ENCODE measurements at regions of chr6 and their contacts with region 1.

Region 1: DNA sequence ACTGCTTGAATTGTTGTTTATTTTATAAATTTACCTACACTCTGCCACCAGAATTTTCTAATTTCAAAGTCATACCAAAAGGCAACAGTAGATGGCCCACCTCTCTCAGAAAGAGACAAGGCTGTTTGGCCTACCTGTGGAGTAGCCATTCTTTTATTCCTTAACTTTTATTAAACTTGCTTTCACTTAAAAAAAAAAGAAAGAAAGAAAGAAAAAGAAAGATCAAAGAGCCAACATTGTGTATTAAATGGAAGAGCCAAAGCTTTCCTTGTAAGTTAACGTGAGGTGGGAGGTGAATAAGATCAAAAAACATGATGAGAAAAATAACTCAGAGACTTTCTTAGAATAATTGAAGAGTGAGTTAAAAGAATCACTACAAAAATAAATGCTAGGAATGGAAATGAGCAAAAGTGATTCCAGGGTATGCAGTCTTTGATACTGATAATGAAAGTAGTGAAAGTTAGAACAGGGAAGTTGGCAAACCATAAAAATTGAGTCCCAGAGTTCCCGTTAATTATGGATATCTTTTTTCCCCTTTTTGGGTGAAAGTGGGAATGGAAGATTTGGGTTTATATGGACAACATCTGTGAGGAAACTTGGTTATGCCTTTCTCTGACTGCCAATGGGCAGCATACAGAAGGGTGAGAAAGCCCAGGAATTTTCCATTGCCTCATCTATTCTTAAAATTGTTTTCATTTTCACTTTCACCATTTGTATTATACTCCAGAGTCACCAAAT is 35.9 kb upstream of the MYB start:
- DNase-seq: no peak
- H3K4me3 ChIP-seq: no peak overlapping the region
- H3K27ac ChIP-seq: no peak overlapping the region
- H3K4me1 ChIP-seq: no peaks in the 10 kb centered on the region
- H3K27me3 ChIP-seq: no peaks in the 10 kb centered on the region
- CTCF ChIP-seq: peak; percentile 14 to 76 (median 60)
- POLR2A ChIP-seq: no peak

Region 2: GRCh38 chr6:135299256-135299655 is 154.0 kb after region 1 on chr6:
- intact Hi-C with region 1: no loop called
- DNase-seq: no peak
- H3K4me3 ChIP-seq: no peak overlapping the region
- H3K27ac ChIP-seq: no peak overlapping the region
- H3K4me1 ChIP-seq: no peaks in the 10 kb centered on the region
- H3K27me3 ChIP-seq: no peaks in the 10 kb centered on the region
- CTCF ChIP-seq: no peak
- POLR2A ChIP-seq: no peak

Region 3: GRCh38 chr6:135423649-135424128 is 278.5 kb after region 1 on chr6:
- intact Hi-C with region 1: loop called (anchors 10 kb)
- DNase-seq: no peak
- H3K4me3 ChIP-seq: no peak overlapping the region
- H3K27ac ChIP-seq: no peak overlapping the region
- H3K4me1 ChIP-seq: no peaks in the 10 kb centered on the region
- H3K27me3 ChIP-seq: no peaks in the 10 kb centered on the region
- CTCF ChIP-seq: peak in 5 of 6 experiments; percentile 58 to 70 (median 63)
- POLR2A ChIP-seq: no peak

Measured in esophagus squamous epithelium (tissue), 5 donors.